CD4-positive, alpha-beta T cell (primary cell): ENCODE measurements at regions of chr9 and their contacts with region 1.

Region 1: GRCh38 chr9:36023260-36024048 is 13.3 kb upstream of the RECK start:
- DNase-seq: peak; percentile 51 to 84 (median 62)
- ATAC-seq: peak; percentile 87
- H3K4me3 ChIP-seq: no peak overlapping the region
- H3K4me3 Mint-ChIP-seq: no peak overlapping the region
- H3K27ac ChIP-seq: no peak overlapping the region
- H3K27ac Mint-ChIP-seq: no peak overlapping the region
- H3K4me1 ChIP-seq: peaks cover 4% of the 10 kb centered on the region
- H3K4me1 Mint-ChIP-seq: no peaks in the 10 kb centered on the region
- H3K27me3 ChIP-seq: peaks cover 0 to 2% of the 10 kb centered on the region in 2 experiments
- H3K27me3 Mint-ChIP-seq: peaks cover 4% of the 10 kb centered on the region
- CTCF ChIP-seq: peak; percentile 82

Region 2: GRCh38 chr9:35790385-35791296 is 232.8 kb before region 1 on chr9:
- CTCF ChIA-PET with region 1: no interaction called
- POLR2A ChIA-PET with region 1: no interaction called
- intact Hi-C with region 1: loop called (anchors 1 to 5 kb)
- DNase-seq: peak; percentile 32 to 84 (median 44)
- ATAC-seq: peak; percentile 97
- H3K4me3 ChIP-seq: no peak overlapping the region
- H3K4me3 Mint-ChIP-seq: no peak overlapping the region
- H3K27ac ChIP-seq: no peak overlapping the region
- H3K27ac Mint-ChIP-seq: no peak overlapping the region
- H3K4me1 ChIP-seq: peaks cover 5% of the 10 kb centered on the region
- H3K4me1 Mint-ChIP-seq: peaks cover 7% of the 10 kb centered on the region
- H3K27me3 ChIP-seq: no peaks in the 10 kb centered on the region
- H3K27me3 Mint-ChIP-seq: no peaks in the 10 kb centered on the region
- CTCF ChIP-seq: peak; percentile 89

Region 3: GRCh38 chr9:35903049-35903448 is 120.4 kb before region 1 on chr9:
- CTCF ChIA-PET with region 1: interaction called, 6 read pairs
- POLR2A ChIA-PET with region 1: no interaction called
- intact Hi-C with region 1: loop called (anchors 1 kb)
- DNase-seq: peak in 6 of 14 experiments; percentile 23 to 80 (median 64)
- ATAC-seq: peak; percentile 84
- H3K4me3 ChIP-seq: no peak overlapping the region
- H3K4me3 Mint-ChIP-seq: no peak overlapping the region
- H3K27ac ChIP-seq: no peak overlapping the region
- H3K27ac Mint-ChIP-seq: no peak overlapping the region
- H3K4me1 ChIP-seq: peaks cover 46% of the 10 kb centered on the region
- H3K4me1 Mint-ChIP-seq: peaks cover 45% of the 10 kb centered on the region
- H3K27me3 ChIP-seq: no peaks in the 10 kb centered on the region
- H3K27me3 Mint-ChIP-seq: peaks cover 3% of the 10 kb centered on the region
- CTCF ChIP-seq: peak; percentile 88

Region 4: GRCh38 chr9:35954942-35955546 is 68.4 kb before region 1 on chr9:
- CTCF ChIA-PET with region 1: interaction called, 14 read pairs
- POLR2A ChIA-PET with region 1: no interaction called
- intact Hi-C with region 1: loop called (anchors 1 kb)
- DNase-seq: peak in 13 of 14 experiments; percentile 14 to 83 (median 33)
- ATAC-seq: peak; percentile 81
- H3K4me3 ChIP-seq: no peak overlapping the region
- H3K4me3 Mint-ChIP-seq: no peak overlapping the region
- H3K27ac ChIP-seq: no peak overlapping the region
- H3K27ac Mint-ChIP-seq: no peak overlapping the region
- H3K4me1 ChIP-seq: no peaks in the 10 kb centered on the region
- H3K4me1 Mint-ChIP-seq: peaks cover 6% of the 10 kb centered on the region
- H3K27me3 ChIP-seq: peaks cover 0 to 2% of the 10 kb centered on the region in 2 experiments
- H3K27me3 Mint-ChIP-seq: peaks cover 5% of the 10 kb centered on the region
- CTCF ChIP-seq: peak; percentile 87

Region 5: GRCh38 chr9:35972093-35972492 is 51.4 kb before region 1 on chr9:
- CTCF ChIA-PET with region 1: no interaction called
- POLR2A ChIA-PET with region 1: no interaction called
- intact Hi-C with region 1: no loop called
- DNase-seq: peak in 9 of 14 experiments; percentile 12 to 50 (median 16)
- ATAC-seq: peak; percentile 49
- H3K4me3 ChIP-seq: no peak overlapping the region
- H3K4me3 Mint-ChIP-seq: no peak overlapping the region
- H3K27ac ChIP-seq: no peak overlapping the region
- H3K27ac Mint-ChIP-seq: no peak overlapping the region
- H3K4me1 ChIP-seq: peaks cover 5% of the 10 kb centered on the region
- H3K4me1 Mint-ChIP-seq: peaks cover 11% of the 10 kb centered on the region
- H3K27me3 ChIP-seq: peaks cover 14 to 18% of the 10 kb centered on the region in 2 experiments
- H3K27me3 Mint-ChIP-seq: peaks cover 65% of the 10 kb centered on the region
- CTCF ChIP-seq: no peak

Region 6: DNA sequence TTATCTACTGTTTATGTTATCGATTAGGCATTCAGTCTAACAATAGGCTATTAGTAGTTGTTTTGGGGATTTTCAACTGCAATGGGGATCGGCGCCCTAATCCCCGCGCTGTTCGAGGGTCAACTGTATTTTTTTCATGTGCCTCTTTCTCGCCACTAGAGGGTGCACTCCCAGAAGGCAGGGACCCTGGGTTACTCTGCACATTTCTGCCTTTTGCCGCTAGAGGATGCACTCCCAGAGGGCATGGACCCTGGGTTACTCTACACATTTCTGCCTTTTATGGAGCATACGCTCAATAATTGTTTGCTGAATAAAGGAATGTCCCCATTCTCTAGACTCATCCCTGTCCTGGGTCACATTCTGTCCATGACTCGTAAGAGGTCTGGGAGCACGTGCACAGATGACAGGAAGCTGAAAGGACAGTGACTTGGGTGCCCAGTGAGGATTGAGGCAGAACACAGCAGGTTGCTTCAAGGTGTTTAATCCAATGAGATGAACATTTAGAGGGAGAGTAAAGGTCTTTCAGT is 14.6 kb before region 1 on chr9:
- CTCF ChIA-PET with region 1: interaction called, 16 read pairs
- POLR2A ChIA-PET with region 1: interaction called, 3 read pairs
- intact Hi-C with region 1: no loop called
- DNase-seq: peak; percentile 29 to 85 (median 49)
- ATAC-seq: peak; percentile 99
- H3K4me3 ChIP-seq: no peak overlapping the region
- H3K4me3 Mint-ChIP-seq: no peak overlapping the region
- H3K27ac ChIP-seq: no peak overlapping the region
- H3K27ac Mint-ChIP-seq: no peak overlapping the region
- H3K4me1 ChIP-seq: peaks cover 11% of the 10 kb centered on the region
- H3K4me1 Mint-ChIP-seq: peaks cover 18% of the 10 kb centered on the region
- H3K27me3 ChIP-seq: peaks cover 0 to 4% of the 10 kb centered on the region in 2 experiments
- H3K27me3 Mint-ChIP-seq: peaks cover 31% of the 10 kb centered on the region
- CTCF ChIP-seq: peak; percentile 100